PC-3 (cell line): ENCODE measurements at regions of chrX and their contacts with region 1.

Region 1: DNA sequence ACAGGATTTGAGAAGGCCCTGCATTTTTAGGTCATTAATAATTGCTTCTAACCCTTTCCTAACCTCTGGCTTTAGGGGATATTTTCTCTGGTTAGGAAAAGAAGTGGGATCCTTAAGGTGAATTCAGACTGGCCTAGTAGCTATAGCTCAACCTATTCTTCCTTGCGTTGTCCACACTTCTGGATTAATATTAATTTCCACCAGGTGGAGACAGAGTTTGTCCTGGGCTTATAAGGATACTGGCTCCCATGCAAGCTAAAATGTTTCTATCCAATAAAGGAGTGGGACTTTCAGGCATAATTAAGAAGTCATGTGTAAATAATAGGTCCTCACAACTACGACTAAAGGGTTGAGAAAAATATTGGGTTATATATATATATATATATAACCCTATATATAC is 860.0 kb upstream of the POU3F4 start:
- DNase-seq: peak; percentile 43
- ATAC-seq: peak; percentile 50; the same call in 1 of the 2 replicates
- H3K4me3 ChIP-seq: no peak overlapping the region
- H3K27ac ChIP-seq: no peak overlapping the region
- H3K4me1 ChIP-seq: no peaks in the 10 kb centered on the region
- H3K27me3 ChIP-seq: no peaks in the 10 kb centered on the region
- CTCF ChIP-seq: peak; percentile 46

Region 2: GRCh38 chrX:82666355-82666754 is 18.3 kb after region 1 on chrX:
- CTCF ChIA-PET with region 1: no interaction called
- POLR2A ChIA-PET with region 1: no interaction called
- intact Hi-C with region 1: no loop called
- DNase-seq: no peak
- ATAC-seq: no peak
- H3K4me3 ChIP-seq: no peak overlapping the region
- H3K27ac ChIP-seq: no peak overlapping the region
- H3K4me1 ChIP-seq: no peaks in the 10 kb centered on the region
- H3K27me3 ChIP-seq: no peaks in the 10 kb centered on the region
- CTCF ChIP-seq: no peak

Region 3: GRCh38 chrX:82757614-82758013 is 109.6 kb after region 1 on chrX:
- CTCF ChIA-PET with region 1: no interaction called
- POLR2A ChIA-PET with region 1: no interaction called
- intact Hi-C with region 1: no loop called
- DNase-seq: peak; percentile 2
- ATAC-seq: no peak
- H3K4me3 ChIP-seq: no peak overlapping the region
- H3K27ac ChIP-seq: no peak overlapping the region
- H3K4me1 ChIP-seq: 0 out of 2 replicates have a peak, but pooled peaks cover 5% of the 10 kb centered on the region
- H3K27me3 ChIP-seq: no peaks in the 10 kb centered on the region
- CTCF ChIP-seq: no peak

Region 4: DNA sequence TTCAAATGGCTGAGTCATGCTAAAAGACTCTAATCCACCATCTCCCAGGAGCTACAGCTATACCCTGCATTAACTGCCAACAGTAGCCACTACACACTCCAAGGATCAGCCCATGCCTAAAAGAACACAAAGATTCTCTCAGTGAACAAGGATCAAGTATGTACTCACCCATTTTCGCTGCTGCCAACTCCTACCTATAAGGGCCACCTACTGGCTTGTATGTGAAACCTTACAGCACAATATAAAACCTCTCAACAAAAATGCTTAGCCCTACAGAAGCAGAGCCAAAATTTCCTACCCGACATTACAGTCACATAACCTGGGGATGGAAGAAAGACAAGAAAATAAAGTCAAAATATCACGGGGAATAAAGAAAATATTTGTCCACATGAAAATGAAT is 297.3 kb after region 1 on chrX:
- CTCF ChIA-PET with region 1: no interaction called
- POLR2A ChIA-PET with region 1: no interaction called
- intact Hi-C with region 1: loop called (anchors 1 kb)
- DNase-seq: peak; percentile 31
- ATAC-seq: peak; percentile 64
- H3K4me3 ChIP-seq: no peak overlapping the region
- H3K27ac ChIP-seq: no peak overlapping the region
- H3K4me1 ChIP-seq: no peaks in the 10 kb centered on the region
- H3K27me3 ChIP-seq: no peaks in the 10 kb centered on the region
- CTCF ChIP-seq: peak; percentile 46

Region 5: DNA sequence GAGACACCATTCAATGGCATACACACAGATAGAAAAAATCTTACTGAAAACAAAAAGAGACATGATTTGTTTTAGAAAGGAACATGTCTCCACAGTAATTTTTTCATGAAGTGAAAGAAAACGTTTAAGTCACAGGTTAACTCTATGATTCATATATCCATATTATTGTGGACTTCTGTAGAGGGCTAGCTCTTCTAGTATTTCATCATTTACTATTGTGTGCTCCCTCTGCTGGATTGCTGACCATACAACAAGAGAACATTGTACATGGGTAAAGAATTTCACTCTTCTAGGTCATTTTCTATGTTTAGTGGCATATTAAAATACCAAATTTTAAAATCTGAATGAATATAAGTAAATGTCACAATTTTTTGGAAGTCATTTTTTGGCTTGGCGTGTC is 768.2 kb after region 1 on chrX:
- CTCF ChIA-PET with region 1: no interaction called
- POLR2A ChIA-PET with region 1: no interaction called
- intact Hi-C with region 1: loop called (anchors 5 kb)
- DNase-seq: peak; percentile 35
- ATAC-seq: peak; percentile 46; the same call in 1 of the 2 replicates
- H3K4me3 ChIP-seq: no peak overlapping the region
- H3K27ac ChIP-seq: no peak overlapping the region
- H3K4me1 ChIP-seq: no peaks in the 10 kb centered on the region
- H3K27me3 ChIP-seq: no peaks in the 10 kb centered on the region
- CTCF ChIP-seq: peak; percentile 54; the same call in 1 of the 2 replicates

Region 6: GRCh38 chrX:83630662-83631061 is 982.6 kb after region 1 on chrX:
- CTCF ChIA-PET with region 1: no interaction called
- POLR2A ChIA-PET with region 1: no interaction called
- intact Hi-C with region 1: loop called (anchors 5 kb)
- DNase-seq: no peak
- ATAC-seq: no peak
- H3K4me3 ChIP-seq: no peak overlapping the region
- H3K27ac ChIP-seq: no peak overlapping the region
- H3K4me1 ChIP-seq: no peaks in the 10 kb centered on the region
- H3K27me3 ChIP-seq: no peaks in the 10 kb centered on the region
- CTCF ChIP-seq: no peak